Thyroid gland (tissue), 4 donors: ENCODE measurements at regions of chr20 and their contacts with region 1.

Region 1: GRCh38 chr20:8722276-8722928 is 346.5 kb upstream of the PLCB4 start:
- DNase-seq: peak; percentile 20 to 28
- H3K4me3 ChIP-seq: no peak overlapping the region
- H3K27ac ChIP-seq: no peak overlapping the region
- H3K4me1 ChIP-seq: no peaks in the 10 kb centered on the region
- H3K27me3 ChIP-seq: no peaks in the 10 kb centered on the region
- CTCF ChIP-seq: peak; percentile 25 to 90 (median 73)
- POLR2A ChIP-seq: no peak

Region 2: GRCh38 chr20:7935027-7935551 is 787.3 kb before region 1 on chr20:
- intact Hi-C with region 1: loop called (anchors 10 kb)
- DNase-seq: no peak
- H3K4me3 ChIP-seq: no peak overlapping the region
- H3K27ac ChIP-seq: no peak overlapping the region
- H3K4me1 ChIP-seq: peaks cover 0 to 3% of the 10 kb centered on the region in 2 donors
- H3K27me3 ChIP-seq: no peaks in the 10 kb centered on the region
- CTCF ChIP-seq: no peak
- POLR2A ChIP-seq: no peak

Region 3: GRCh38 chr20:8049310-8049709 is 673.1 kb before region 1 on chr20:
- intact Hi-C with region 1: loop called (anchors 5 kb)
- DNase-seq: no peak
- H3K4me3 ChIP-seq: no peak overlapping the region
- H3K27ac ChIP-seq: no peak overlapping the region
- H3K4me1 ChIP-seq: no peaks in the 10 kb centered on the region
- H3K27me3 ChIP-seq: no peaks in the 10 kb centered on the region
- CTCF ChIP-seq: no peak
- POLR2A ChIP-seq: no peak

Region 4: DNA sequence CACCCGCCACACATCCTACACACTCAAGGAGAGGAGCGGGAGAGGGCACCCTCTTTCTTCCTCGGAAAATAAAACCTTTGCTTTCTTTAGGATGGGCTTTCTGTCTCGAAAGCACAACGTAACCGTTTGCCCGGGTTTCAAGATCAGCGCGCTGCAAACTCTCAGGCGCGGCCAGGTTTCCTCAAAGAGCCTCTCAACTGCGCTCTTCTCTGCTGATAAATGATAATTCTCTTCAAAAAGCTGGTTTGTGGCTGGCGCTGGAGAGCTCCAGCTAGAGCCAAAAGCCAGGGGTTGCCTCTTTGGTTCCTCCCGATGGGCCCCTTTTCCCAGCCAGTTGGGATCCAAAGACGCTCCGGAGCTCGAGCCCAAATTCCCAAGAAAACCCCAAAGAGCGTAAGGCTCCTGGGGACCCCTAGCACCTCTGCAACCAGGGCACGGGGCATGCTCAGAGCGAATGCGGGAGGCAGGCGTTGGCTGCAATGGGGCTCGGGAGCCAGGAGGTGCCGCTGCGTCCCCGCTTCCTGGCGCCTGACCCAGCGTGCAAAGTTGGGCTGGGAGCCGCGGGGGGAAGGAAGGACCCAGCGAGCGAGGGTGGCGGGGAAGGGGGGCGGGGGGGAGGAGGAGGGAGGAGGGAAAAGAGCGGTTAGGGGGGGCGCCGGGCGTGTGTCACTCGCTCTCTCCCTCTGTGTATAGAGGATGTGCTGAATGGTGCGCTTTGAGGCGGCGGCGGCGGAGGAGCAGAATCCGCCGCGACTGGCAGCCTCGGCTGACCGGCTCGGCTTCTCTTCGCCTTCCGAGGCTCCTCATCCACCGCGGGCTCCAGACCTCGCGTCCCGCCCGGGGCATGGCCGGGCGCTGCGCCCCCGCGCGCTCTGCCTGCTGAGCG is 590.6 kb before region 1 on chr20 and contains the start of gene PLCB1:
- intact Hi-C with region 1: loop called (anchors 10 kb)
- DNase-seq: peak; percentile 80 to 82
- H3K4me3 ChIP-seq: peak within 1 kb of the TSS in 2 of 3 donors; percentile 35 to 44
- H3K27ac ChIP-seq: peak within 1 kb of the TSS in 2 of 3 donors; percentile 50 to 53
- H3K4me1 ChIP-seq: peaks cover 7 to 10% of the 10 kb centered on the region in 2 donors
- H3K27me3 ChIP-seq: no peaks in the 10 kb centered on the region
- CTCF ChIP-seq: peak; percentile 68 to 97 (median 77)
- POLR2A ChIP-seq: no peak
- total RNA-seq, gene PLCB1: 7.3 to 14.1 (median 11.0) TPM

Region 5: DNA sequence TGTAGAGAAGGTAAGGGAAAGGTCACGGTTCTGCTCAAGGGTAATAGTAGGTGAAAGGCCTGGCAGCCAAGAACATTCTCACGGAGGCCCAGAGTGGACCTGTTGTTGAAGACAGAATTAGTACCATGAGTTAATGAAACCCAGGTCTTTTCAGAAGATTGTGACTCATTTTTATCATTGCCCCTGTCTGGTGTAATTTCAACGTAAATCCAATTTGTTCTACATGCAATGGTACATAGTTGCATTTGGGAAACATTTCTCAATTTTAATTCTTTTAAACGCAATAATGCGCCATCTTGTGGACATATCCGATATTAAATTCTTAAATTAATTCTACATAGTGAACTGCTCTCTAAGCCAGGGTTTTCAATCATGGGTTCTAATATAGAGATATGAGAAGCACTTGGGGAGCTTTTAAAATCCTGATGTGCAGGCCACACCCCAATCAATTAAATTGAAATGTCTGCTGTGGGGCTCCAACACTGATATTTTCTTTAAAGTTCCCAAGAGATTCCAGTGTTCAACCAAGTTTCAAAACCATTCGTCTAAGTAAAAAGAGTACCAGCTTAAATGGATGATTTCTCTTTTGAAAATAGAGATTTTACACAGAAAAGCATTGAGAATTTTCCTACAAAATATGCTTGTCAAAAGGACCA is 332.9 kb before region 1 on chr20:
- intact Hi-C with region 1: loop called (anchors 5 kb)
- DNase-seq: peak; percentile 7 to 14
- H3K4me3 ChIP-seq: no peak overlapping the region
- H3K27ac ChIP-seq: no peak overlapping the region
- H3K4me1 ChIP-seq: peaks cover 5 to 15% of the 10 kb centered on the region in 2 donors
- H3K27me3 ChIP-seq: no peaks in the 10 kb centered on the region
- CTCF ChIP-seq: peak; percentile 23 to 66 (median 47)
- POLR2A ChIP-seq: no peak

Region 6: DNA sequence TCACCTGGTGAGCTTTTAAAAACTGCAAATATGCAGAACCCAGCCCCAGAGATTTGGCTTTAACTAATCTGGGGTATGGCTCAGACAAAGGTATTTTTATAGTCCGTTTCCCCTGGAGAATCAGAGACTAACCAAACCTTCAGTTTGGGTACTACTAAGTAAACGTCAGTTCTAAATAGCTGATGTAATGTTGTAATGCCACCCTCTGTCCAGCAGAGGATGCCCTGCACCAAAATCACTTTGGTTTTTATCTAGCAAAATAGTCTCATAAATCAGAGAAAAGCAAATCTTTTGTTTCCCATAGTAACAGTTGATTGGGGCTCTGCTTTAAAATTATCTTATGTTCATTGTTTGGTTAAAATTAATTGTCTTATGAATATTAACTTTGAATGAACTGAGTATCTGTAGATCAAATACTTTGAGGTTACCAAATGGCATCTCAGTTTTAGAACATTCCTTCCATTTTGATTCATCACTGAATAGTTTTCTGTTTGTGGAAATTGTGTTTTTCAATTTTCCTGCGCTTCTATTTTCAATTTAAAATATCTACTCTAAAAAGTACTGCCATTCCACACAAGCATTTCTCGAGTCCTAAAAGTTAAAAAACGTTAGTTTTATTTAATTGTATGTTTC is 68.2 kb after region 1 on chr20:
- intact Hi-C with region 1: no loop called
- DNase-seq: peak; percentile 52
- H3K4me3 ChIP-seq: no peak overlapping the region
- H3K27ac ChIP-seq: no peak overlapping the region
- H3K4me1 ChIP-seq: no peaks in the 10 kb centered on the region
- H3K27me3 ChIP-seq: no peaks in the 10 kb centered on the region
- CTCF ChIP-seq: peak; percentile 90 to 98 (median 97)
- POLR2A ChIP-seq: no peak